AG04450 (cell line): ENCODE measurements at regions of chr3 and their contacts with region 1.

Region 1: GRCh38 chr3:8441969-8442559 is 59.6 kb upstream of the LMCD1 start:
- DNase-seq: peak; percentile 48
- H3K4me3 ChIP-seq: no peak overlapping the region
- H3K27ac ChIP-seq: no peak overlapping the region
- H3K27me3 ChIP-seq: no peaks in the 10 kb centered on the region
- CTCF ChIP-seq: peak; percentile 88

Region 2: GRCh38 chr3:8458238-8458661 is 16.2 kb after region 1 on chr3:
- CTCF ChIA-PET with region 1: interaction called, 14 read pairs
- POLR2A ChIA-PET with region 1: interaction called, 5 read pairs
- DNase-seq: no peak
- H3K4me3 ChIP-seq: no peak overlapping the region
- H3K27ac ChIP-seq: peak overlapping the region; percentile 85
- H3K27me3 ChIP-seq: no peaks in the 10 kb centered on the region
- CTCF ChIP-seq: no peak

Region 3: DNA sequence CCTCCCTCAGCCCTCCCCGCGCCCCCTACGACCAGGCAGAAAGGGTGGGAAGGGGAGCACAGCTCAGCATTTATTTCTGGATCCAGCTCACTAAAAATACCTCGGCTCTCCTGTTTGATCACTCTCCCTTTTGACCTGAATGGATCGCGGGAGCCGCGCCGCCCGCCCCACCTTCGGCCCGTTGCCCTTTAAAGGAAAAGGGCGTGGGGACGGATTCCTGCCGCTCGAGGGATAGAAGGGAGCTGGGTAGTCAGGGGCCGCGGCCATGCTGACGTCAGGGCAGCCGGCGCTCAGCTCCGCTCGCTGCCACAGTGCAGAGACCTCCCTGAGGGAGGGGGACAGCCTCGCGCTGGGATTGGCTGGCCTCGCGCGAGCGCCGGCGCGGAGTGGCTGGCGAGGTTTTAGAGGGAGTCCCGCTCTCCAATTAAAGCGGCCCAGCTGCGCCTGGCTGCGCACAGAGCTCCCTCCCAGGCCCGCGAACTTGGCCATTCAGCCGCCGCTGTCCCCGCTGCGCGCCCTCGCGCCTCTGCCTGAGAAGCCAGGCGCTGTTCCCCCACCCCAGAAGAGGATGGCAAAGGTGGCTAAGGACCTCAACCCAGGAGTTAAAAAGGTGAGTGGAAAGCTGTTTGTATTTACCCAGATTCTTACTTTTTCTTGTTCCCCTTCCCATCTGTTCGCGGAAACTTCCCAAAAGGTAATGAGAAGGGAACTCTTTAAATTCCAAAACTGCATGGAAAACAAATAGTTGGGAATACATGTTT is 59.5 kb after region 1 on chr3 and contains the start of gene LMCD1:
- CTCF ChIA-PET with region 1: interaction called, 45 read pairs
- POLR2A ChIA-PET with region 1: interaction called, 20 read pairs
- DNase-seq: peak; percentile 89
- H3K4me3 ChIP-seq: peak within 1 kb of the TSS; percentile 64
- H3K27ac ChIP-seq: peak within 1 kb of the TSS; percentile 94
- H3K27me3 ChIP-seq: no peaks in the 10 kb centered on the region
- CTCF ChIP-seq: peak; percentile 38
- polyA plus RNA-seq, gene LMCD1: 39.1 and 49.5 TPM in 2 replicates

Region 4: GRCh38 chr3:8555113-8555661 is 113.1 kb after region 1 on chr3:
- CTCF ChIA-PET with region 1: interaction called, 11 read pairs
- POLR2A ChIA-PET with region 1: no interaction called
- DNase-seq: peak; percentile 74
- H3K4me3 ChIP-seq: no peak overlapping the region
- H3K27ac ChIP-seq: peak overlapping the region; percentile 92
- H3K27me3 ChIP-seq: no peaks in the 10 kb centered on the region
- CTCF ChIP-seq: no peak

Region 5: GRCh38 chr3:8607234-8608040 is 165.4 kb after region 1 on chr3:
- CTCF ChIA-PET with region 1: interaction called, 44 read pairs
- POLR2A ChIA-PET with region 1: no interaction called
- DNase-seq: peak; percentile 37
- H3K4me3 ChIP-seq: no peak overlapping the region
- H3K27ac ChIP-seq: no peak overlapping the region
- H3K27me3 ChIP-seq: peaks cover 3% of the 10 kb centered on the region
- CTCF ChIP-seq: peak; percentile 60

Region 6: DNA sequence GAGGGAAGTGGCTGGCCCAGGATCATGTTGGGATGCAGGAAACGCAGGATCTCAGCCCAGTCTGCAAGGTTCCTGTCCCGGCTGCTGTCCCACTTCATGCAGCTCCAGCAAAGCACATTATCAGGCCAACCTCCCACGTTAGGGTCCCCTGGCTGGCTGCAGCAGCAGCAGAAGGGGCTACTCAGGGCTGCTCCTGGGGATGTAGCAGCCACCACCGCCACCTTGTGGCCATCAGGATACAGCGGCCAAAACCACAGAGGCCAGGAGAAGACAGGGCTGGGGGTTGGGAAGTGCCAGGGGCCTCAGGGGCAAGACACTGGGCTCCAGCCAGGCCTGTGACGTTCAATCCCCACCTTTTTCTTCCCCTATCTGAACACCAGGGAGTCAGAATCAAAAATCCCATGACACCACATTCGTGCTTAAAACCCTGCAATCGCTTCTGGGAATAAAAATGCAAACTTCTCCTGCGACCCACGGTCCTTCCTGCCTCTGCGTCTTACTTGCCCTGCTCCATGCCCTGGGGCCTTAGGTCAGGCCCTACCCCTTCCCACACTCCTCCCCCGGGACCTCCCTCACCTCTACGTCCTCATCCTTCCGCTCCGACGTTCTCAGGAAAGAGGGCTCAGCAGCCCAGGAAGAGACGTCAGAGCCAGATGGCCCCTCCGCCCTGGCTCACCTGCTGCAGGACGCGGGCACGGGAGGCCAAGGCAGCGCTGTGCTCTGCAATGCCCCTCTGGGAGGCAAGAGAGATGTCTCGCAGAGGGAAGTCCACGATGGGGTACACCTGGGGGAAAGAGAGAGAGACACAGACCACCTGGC is 181.0 kb after region 1 on chr3:
- CTCF ChIA-PET with region 1: interaction called, 159 read pairs
- POLR2A ChIA-PET with region 1: interaction called, 8 read pairs
- DNase-seq: peak; percentile 36
- H3K4me3 ChIP-seq: no peak overlapping the region
- H3K27ac ChIP-seq: no peak overlapping the region
- H3K27me3 ChIP-seq: no peaks in the 10 kb centered on the region
- CTCF ChIP-seq: peak; percentile 94

Region 7: DNA sequence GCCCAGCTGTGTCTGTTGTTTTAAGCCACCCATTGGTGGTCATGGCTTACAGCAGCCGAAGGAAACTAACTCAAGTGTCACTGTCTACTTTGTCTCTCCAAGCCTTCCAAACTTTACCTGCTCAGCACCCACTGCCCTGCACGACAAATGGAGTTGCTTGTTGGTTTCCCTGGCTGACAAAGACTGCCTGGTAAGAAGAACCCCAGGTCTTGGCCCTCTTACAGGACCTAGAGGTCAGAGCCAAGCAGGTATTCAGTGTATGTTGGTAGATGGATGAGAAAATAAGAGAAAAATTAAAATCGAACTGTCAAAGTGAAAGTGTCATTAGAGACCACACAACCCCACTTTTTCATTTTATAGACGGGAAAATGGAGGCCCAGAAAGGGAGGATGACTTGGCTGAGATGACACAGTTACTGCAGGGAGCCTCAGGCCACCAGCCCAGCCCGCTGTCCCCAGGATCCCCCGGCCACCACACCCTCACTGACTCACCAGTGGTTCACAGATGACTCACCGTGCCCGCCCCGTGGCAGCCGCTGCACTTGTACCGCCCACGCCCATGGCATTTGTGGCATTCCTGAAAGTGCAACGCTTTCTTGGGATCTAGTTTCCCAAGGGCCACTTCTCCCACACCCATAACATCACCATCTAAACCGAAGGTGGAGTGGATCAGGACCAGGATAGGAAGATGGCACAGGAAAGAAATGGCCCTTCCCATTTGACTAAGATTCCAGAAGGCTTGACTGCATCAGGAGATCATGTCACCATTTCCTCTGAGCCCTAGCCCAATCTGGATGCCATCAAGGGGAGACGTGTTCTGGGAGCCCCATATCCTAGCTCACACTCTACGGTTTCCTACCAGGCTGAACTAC is 187.3 kb after region 1 on chr3:
- CTCF ChIA-PET with region 1: interaction called, 159 read pairs
- POLR2A ChIA-PET with region 1: no interaction called
- DNase-seq: peak; percentile 30
- H3K4me3 ChIP-seq: no peak overlapping the region
- H3K27ac ChIP-seq: peak overlapping the region; percentile 31
- H3K27me3 ChIP-seq: no peaks in the 10 kb centered on the region
- CTCF ChIP-seq: no peak